AG04450 (cell line): ENCODE measurements at regions of chr9 and their contacts with region 1.

Region 1: GRCh38 chr9:100222674-100223073 is 123.6 kb downstream of the INVS start:
- DNase-seq: no peak
- H3K4me3 ChIP-seq: no peak overlapping the region
- H3K27ac ChIP-seq: no peak overlapping the region
- H3K27me3 ChIP-seq: no peaks in the 10 kb centered on the region
- CTCF ChIP-seq: peak; percentile 58

Region 2: DNA sequence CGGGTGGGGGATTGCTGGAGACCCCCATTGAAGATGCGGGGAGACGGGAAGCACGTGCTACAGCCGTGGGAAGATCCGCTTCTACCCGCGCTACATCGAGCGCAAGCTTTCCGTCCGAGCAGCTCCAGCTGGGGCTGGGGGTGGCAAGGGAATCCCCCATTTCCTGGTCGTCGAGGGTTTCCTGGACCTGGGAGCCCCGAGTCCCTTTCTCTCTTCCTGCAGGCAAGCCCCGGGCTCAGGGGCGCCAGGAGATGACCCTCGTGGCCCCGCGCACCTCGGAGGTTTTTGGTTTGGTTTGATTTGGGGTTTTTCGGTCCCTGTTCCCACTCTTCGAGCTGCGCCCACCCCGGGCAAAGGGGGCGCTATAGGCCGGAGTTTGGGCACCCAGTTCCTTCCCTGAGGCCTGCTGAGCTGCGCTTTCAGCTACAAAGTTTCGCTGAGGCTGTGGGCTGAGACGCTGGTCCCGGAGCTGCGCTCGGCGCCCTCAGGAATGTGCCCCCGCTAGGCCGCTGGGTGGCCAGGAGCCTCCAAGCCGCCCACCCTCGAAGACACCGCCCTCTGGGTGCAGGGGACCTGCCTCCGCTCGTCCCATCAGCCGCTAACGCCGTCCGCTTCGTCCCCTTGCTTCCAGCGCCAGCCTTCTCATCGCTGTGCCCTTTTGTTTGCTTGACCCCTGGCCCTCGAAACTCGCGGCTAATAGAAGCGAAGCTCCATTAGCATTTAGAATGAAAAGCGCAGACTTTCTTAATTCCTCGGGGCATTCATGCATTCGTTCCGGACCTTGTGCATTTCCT is 398.1 kb before region 1 on chr9:
- CTCF ChIA-PET with region 1: interaction called, 10 read pairs
- POLR2A ChIA-PET with region 1: no interaction called
- DNase-seq: no peak
- H3K4me3 ChIP-seq: peak overlapping the region; percentile 81
- H3K27ac ChIP-seq: no peak overlapping the region
- H3K27me3 ChIP-seq: peaks cover 16% of the 10 kb centered on the region
- CTCF ChIP-seq: peak; percentile 53

Region 3: DNA sequence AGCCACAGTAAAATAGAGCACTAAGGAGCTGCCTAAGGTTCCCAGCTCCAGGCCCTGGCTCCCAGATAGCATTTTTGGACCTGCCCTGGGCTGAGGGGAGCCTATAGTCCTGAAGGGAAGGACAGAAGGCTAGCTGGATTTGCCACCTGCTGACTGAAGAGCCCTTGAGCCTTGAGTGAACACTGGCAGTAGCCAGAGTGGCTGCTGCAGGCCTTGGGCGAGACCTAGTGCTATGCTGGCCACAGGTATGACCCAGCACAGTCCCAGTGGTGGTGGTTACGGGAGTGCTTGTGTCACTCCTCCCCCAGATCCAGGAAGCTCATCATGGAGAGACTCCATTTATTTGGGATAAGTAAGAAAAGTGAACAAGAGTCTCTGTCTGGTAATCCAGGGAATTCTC is 326.6 kb before region 1 on chr9:
- CTCF ChIA-PET with region 1: no interaction called
- POLR2A ChIA-PET with region 1: no interaction called
- DNase-seq: no peak
- H3K4me3 ChIP-seq: no peak overlapping the region
- H3K27ac ChIP-seq: no peak overlapping the region
- H3K27me3 ChIP-seq: peaks cover 41% of the 10 kb centered on the region
- CTCF ChIP-seq: no peak

Region 4: DNA sequence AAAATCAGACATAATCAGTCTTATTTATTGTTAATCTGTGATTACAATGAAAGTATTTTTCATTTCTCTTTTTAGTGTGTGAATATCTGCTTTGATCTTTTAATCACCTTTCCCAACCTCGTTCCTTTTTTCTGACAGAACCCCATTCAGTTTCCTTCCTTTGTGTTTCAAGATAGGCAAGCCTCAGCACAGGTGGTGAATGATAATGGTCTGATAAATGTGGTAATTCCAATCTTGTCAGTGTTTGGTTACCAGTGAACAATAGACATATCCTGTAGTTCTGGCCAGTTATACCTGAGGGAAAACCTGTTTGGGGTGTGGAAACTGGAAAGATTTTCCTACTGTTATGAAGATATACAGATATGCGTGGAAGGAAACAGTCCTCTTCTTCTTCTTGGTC is 302.7 kb before region 1 on chr9:
- CTCF ChIA-PET with region 1: interaction called, 13 read pairs
- POLR2A ChIA-PET with region 1: no interaction called
- DNase-seq: no peak
- H3K4me3 ChIP-seq: no peak overlapping the region
- H3K27ac ChIP-seq: no peak overlapping the region
- H3K27me3 ChIP-seq: no peaks in the 10 kb centered on the region
- CTCF ChIP-seq: no peak

Region 5: DNA sequence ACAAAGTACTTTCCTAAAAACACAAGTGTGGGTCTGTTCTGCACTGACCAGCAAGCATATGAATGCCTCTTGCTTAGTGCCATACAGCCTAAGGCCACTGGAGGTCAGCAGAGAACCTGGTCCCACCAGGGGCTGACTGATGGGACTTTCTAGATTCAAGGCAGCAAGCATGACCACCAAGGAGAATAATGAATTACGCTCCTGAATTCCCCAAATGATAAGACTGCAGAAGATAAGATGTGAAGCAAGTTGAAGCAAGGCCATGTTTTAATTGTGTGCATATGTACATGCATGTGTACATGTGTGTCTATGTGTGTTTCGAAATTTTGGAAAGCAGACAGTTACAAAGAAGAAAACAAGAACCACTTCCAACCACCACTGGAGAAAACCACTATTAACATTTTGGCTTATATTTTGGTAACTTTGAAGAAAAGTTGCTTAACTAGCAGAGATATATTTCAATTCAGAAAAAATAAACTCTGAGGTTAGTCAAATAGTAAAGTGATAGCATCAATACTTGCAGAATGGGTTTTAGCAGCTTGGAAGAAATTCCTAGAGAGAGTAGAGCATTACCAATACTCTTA is 194.4 kb before region 1 on chr9:
- CTCF ChIA-PET with region 1: interaction called, 26 read pairs
- POLR2A ChIA-PET with region 1: no interaction called
- DNase-seq: peak; percentile 49
- H3K4me3 ChIP-seq: no peak overlapping the region
- H3K27ac ChIP-seq: no peak overlapping the region
- H3K27me3 ChIP-seq: no peaks in the 10 kb centered on the region
- CTCF ChIP-seq: peak; percentile 99

Region 6: GRCh38 chr9:100112677-100113334 is 109.9 kb before region 1 on chr9:
- CTCF ChIA-PET with region 1: interaction called, 24 read pairs
- POLR2A ChIA-PET with region 1: no interaction called
- DNase-seq: no peak
- H3K4me3 ChIP-seq: no peak overlapping the region
- H3K27ac ChIP-seq: no peak overlapping the region
- H3K27me3 ChIP-seq: no peaks in the 10 kb centered on the region
- CTCF ChIP-seq: no peak